PC-3 (cell line): ENCODE measurements at regions of chr1 and their contacts with region 1.

Region 1: GRCh38 chr1:28736450-28737306 is at the start of gene YTHDF2:
- DNase-seq: peak; percentile 97
- ATAC-seq: peak; percentile 95
- H3K4me3 ChIP-seq: peak within 1 kb of the TSS; percentile 90
- H3K27ac ChIP-seq: peak within 1 kb of the TSS; percentile 70
- H3K4me1 ChIP-seq: peaks cover 21% of the 10 kb centered on the region
- H3K27me3 ChIP-seq: no peaks in the 10 kb centered on the region
- CTCF ChIP-seq: peak; percentile 92
- total RNA-seq, gene YTHDF2: 49.8 and 55.0 TPM in 2 replicates

Region 2: GRCh38 chr1:28259307-28260167 is 477.1 kb before region 1 on chr1 and contains the start of gene SESN2:
- CTCF ChIA-PET with region 1: interaction called, 15 read pairs
- POLR2A ChIA-PET with region 1: no interaction called
- intact Hi-C with region 1: no loop called
- DNase-seq: peak; percentile 99
- ATAC-seq: peak; percentile 87
- H3K4me3 ChIP-seq: peak within 1 kb of the TSS; percentile 100
- H3K27ac ChIP-seq: peak within 1 kb of the TSS; percentile 80
- H3K4me1 ChIP-seq: peaks cover 17% of the 10 kb centered on the region
- H3K27me3 ChIP-seq: no peaks in the 10 kb centered on the region
- CTCF ChIP-seq: no peak
- total RNA-seq, gene SESN2: 6.9 and 10.7 TPM in 2 replicates

Region 3: DNA sequence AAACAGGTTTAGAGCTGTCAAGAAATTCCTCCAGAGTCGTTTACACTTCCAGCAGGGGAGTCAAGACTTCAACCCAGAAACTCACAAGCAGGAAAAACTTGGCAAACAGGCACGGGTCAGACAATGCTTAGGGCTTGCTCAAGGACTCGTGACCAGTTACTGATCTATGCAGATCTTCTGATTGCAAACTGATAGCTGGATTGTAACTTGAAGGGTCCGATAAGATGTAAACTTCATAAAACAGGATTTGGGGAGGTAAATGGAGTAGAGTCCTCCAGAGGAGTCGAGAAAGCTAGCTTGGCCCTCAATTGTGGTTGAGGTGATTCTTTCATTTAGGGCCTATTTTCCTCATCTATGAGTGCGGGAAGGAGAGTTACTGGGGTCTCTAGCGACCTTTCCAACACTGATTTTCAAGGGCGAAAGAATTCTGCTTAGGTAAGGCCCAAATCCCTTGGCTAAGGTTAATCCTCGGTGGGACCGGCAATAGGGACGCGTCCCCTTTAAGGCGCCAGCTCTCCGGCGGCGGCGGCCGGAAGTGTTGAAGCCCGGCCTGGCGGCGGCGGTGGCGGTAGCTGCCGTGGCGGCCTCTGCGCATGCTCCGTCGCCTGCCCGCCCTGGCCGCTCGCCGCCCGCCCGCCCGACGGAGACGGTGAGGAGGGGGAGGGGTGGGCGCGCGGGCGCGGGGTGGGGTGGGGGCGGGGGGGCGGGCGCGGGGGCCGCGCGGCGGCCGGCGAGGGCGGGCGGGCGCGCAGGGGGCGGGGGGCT is 68.3 kb before region 1 on chr1 and contains the start of gene GMEB1:
- CTCF ChIA-PET with region 1: interaction called, 9 read pairs
- POLR2A ChIA-PET with region 1: interaction called, 4 read pairs
- intact Hi-C with region 1: loop called (anchors 1 kb)
- DNase-seq: peak; percentile 87
- ATAC-seq: peak; percentile 84
- H3K4me3 ChIP-seq: peak within 1 kb of the TSS; percentile 83
- H3K27ac ChIP-seq: peak within 1 kb of the TSS; percentile 68
- H3K4me1 ChIP-seq: peaks cover 10% of the 10 kb centered on the region; the same call in 1 of the 2 replicates
- H3K27me3 ChIP-seq: no peaks in the 10 kb centered on the region
- CTCF ChIP-seq: no peak
- total RNA-seq, gene GMEB1: 5.2 and 10.8 TPM in 2 replicates

Region 4: GRCh38 chr1:28756846-28757245 is 20.2 kb after region 1 on chr1:
- CTCF ChIA-PET with region 1: interaction called, 29 read pairs
- POLR2A ChIA-PET with region 1: no interaction called
- intact Hi-C with region 1: no loop called
- DNase-seq: peak; percentile 15
- ATAC-seq: peak; percentile 67
- H3K4me3 ChIP-seq: no peak overlapping the region
- H3K27ac ChIP-seq: no peak overlapping the region
- H3K4me1 ChIP-seq: peaks cover 3% of the 10 kb centered on the region; the same call in 1 of the 2 replicates
- H3K27me3 ChIP-seq: no peaks in the 10 kb centered on the region
- CTCF ChIP-seq: peak; percentile 56

Region 5: GRCh38 chr1:28830814-28831213 is 94.1 kb after region 1 on chr1:
- CTCF ChIA-PET with region 1: no interaction called
- POLR2A ChIA-PET with region 1: no interaction called
- intact Hi-C with region 1: no loop called
- DNase-seq: no peak
- ATAC-seq: no peak
- H3K4me3 ChIP-seq: no peak overlapping the region
- H3K27ac ChIP-seq: no peak overlapping the region
- H3K4me1 ChIP-seq: peaks cover 7% of the 10 kb centered on the region
- H3K27me3 ChIP-seq: no peaks in the 10 kb centered on the region
- CTCF ChIP-seq: no peak

Region 6: GRCh38 chr1:28865997-28866650 is 129.4 kb after region 1 on chr1:
- CTCF ChIA-PET with region 1: no interaction called
- POLR2A ChIA-PET with region 1: no interaction called
- intact Hi-C with region 1: no loop called
- DNase-seq: peak; percentile 47
- ATAC-seq: peak; percentile 74
- H3K4me3 ChIP-seq: no peak overlapping the region
- H3K27ac ChIP-seq: no peak overlapping the region
- H3K4me1 ChIP-seq: no peaks in the 10 kb centered on the region
- H3K27me3 ChIP-seq: no peaks in the 10 kb centered on the region; the same call in 1 of the 2 replicates
- CTCF ChIP-seq: no peak

Region 7: DNA sequence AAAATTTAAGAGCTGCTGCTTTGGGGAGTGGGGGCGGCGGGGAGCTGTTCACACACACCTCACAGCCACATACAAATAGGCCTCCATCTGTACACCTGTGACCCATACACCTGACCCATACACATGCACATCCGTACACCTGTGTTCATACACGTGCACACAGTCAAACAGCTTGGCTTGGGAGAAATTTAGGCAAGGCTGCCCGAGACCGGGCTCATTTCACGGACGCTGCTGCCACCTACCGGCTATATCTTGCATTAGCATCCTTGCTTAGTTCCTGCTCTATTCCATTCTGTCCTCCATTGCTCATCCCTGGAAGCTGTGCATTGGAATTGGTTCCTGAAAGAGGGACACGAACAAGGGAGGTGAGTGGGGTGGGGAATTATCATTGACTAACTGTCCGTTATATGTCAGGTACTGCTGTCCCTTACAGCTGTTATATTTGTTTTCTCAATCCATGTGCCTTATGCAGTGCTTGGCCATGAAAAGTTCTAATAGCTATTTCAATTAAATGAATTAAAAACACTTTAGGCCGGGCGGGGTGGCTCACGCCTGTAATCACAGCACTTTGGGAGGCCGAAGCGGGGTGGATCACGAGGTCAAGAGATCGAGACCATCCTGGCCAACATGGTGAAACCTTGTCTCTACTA is 140.6 kb after region 1 on chr1:
- CTCF ChIA-PET with region 1: interaction called, 3 read pairs
- POLR2A ChIA-PET with region 1: no interaction called
- intact Hi-C with region 1: loop called (anchors 1 kb)
- DNase-seq: peak; percentile 87
- ATAC-seq: peak; percentile 77
- H3K4me3 ChIP-seq: no peak overlapping the region
- H3K27ac ChIP-seq: no peak overlapping the region
- H3K4me1 ChIP-seq: peaks cover 4% of the 10 kb centered on the region
- H3K27me3 ChIP-seq: no peaks in the 10 kb centered on the region
- CTCF ChIP-seq: peak; percentile 95